ENCODE measurements at regions of chr16 and their contacts with region 1.

Region 1: GRCh38 chr16:23362460-23363317 is 60.6 kb downstream of the SCNN1B start:
- DNase-seq: peak; percentile 9 to 27
- ATAC-seq: peak in 6 of 8 donors; percentile 38 to 85 (median 62)
- H3K4me3 ChIP-seq: no peak overlapping the region
- H3K27ac ChIP-seq: no peak overlapping the region
- H3K4me1 ChIP-seq: peaks cover 0 to 16% (median 6%) of the 10 kb centered on the region in 9 donors
- H3K27me3 ChIP-seq: peaks cover 0 to 3% (median 0%) of the 10 kb centered on the region in 7 donors
- CTCF ChIP-seq: no peak

Region 2: DNA sequence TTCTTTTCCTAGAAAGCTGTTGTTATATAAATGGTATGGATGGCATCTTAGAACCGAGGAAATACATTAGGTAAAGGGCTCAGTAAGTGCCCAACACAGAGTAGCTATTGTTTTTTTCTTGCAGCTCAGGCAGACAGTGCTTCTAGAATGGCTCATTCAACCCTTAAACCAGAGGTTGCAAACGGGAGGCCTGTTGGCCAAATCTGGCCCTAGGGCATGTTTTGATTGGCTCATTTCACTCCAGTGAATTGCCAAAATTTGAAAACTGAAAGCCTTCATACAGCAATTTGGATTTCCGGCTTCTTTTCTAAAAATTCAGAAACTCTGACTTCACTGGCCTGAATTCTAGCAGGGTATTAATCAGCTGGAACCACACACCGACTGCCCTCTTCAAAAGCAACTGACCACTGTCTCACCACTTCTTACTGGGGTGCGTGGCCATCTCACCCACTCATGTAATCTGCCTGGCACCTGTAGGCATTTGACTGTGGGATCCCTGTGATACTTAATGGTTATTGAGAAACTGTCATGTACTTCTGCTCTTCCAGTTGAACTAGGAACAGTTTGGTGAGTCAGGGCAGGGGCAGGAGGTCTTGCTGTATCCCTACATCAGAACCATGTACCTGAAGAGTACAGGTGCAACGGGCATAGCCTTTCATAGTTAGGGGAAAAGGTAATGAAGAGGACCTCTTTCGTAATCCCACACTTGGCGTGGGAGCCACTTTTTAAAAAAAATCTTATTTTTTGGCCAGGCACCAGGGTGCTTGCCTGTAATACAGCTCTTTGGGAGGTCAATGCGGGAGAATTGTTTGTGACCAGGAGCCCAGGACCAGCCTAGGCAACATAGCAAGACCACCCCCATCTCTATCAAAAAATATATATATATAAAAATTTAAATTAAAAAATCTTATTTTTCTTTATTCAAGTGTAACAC is 114.2 kb before region 1 on chr16:
- intact Hi-C with region 1: loop called in 1 of 10 experiments (anchors 10 kb)
- DNase-seq: no peak
- ATAC-seq: peak in 3 of 8 donors; percentile 6 to 47 (median 46)
- H3K4me3 ChIP-seq: no peak overlapping the region
- H3K27ac ChIP-seq: peak overlapping the region in 1 of 10 donors; percentile 17
- H3K4me1 ChIP-seq: peaks cover 0 to 9% (median 0%) of the 10 kb centered on the region in 9 donors
- H3K27me3 ChIP-seq: no peaks in the 10 kb centered on the region
- CTCF ChIP-seq: no peak

Region 3: GRCh38 chr16:23286131-23286532 is 76.6 kb before region 1 on chr16:
- intact Hi-C with region 1: loop called in 1 of 10 experiments (anchors 2 kb)
- DNase-seq: no peak
- ATAC-seq: no peak
- H3K4me3 ChIP-seq: no peak overlapping the region
- H3K27ac ChIP-seq: no peak overlapping the region
- H3K4me1 ChIP-seq: no peaks in the 10 kb centered on the region
- H3K27me3 ChIP-seq: peaks cover 0 to 38% (median 15%) of the 10 kb centered on the region in 7 donors
- CTCF ChIP-seq: no peak

Region 4: DNA sequence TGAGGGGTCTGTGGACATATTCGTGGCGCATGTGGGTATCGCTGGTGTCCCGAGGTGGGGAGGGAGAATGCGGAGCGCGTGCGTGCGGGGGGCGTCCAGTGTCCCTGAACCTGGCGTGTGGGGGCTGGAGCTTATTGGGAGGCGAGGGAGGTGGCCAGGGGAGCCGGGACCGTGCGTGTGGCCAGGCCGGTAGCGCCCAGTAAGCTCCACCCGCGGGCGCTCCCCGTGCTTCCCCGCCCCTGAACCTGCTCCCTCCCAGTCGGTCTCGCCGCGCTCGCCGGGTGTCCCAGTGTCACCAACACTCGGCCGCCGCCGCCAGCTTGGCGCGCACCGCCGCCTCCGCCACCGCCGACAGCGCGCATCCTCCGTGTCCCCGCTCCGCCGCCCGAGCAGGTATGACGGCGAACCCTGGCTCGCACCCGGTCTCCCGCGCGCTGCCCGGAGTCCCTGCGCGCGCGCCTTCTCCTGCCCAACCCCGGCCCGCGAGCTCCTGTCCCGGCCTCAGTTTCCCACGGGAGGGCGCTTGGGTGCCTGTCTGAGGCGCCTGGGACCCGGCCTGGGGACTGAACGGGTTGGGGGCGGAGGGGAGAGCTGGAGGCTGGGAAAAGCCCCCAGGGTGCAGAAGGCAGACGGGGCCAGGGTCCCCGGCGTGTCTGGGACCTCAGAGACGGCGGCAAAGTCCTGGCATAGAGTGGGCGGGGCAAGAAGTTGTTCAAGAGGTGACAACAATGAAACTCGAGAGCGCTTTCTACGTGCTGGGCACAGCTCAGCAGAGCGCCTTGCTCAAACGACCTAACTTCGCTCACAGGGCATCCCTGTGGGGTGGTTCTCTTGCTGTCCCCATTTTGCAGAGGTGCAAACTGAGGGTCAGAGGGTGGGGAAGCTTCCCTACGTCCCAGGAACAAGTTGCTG is 60.4 kb before region 1 on chr16 and contains the start of gene SCNN1B:
- intact Hi-C with region 1: loop called in 1 of 10 experiments (anchors 10 kb)
- DNase-seq: peak in 1 of 2 donors; percentile 21
- ATAC-seq: peak in 1 of 8 donors; percentile 53
- H3K4me3 ChIP-seq: peak within 1 kb of the TSS in 7 of 10 donors; percentile 19 to 37 (median 27)
- H3K27ac ChIP-seq: no peak within 1 kb of the TSS
- H3K4me1 ChIP-seq: peaks cover 0 to 9% (median 0%) of the 10 kb centered on the region in 9 donors
- H3K27me3 ChIP-seq: peaks cover 8 to 62% (median 41%) of the 10 kb centered on the region in 7 donors
- CTCF ChIP-seq: no peak
- total RNA-seq, gene SCNN1B: 0.11 to 0.38 (median 0.22) TPM in 6 of 10 donors, not detected in the others

Region 5: GRCh38 chr16:23423496-23424049 is 60.9 kb after region 1 on chr16:
- intact Hi-C with region 1: loop called in 1 of 10 experiments (anchors 10 kb)
- DNase-seq: peak; percentile 29 to 85
- ATAC-seq: peak; percentile 92 to 97 (median 96)
- H3K4me3 ChIP-seq: no peak overlapping the region
- H3K27ac ChIP-seq: peak overlapping the region; percentile 65 to 87 (median 78)
- H3K4me1 ChIP-seq: peaks cover 0 to 19% (median 9%) of the 10 kb centered on the region in 9 donors
- H3K27me3 ChIP-seq: no peaks in the 10 kb centered on the region
- CTCF ChIP-seq: no peak